ENCODE measurements at regions of chr3 and their contacts with region 1.

Region 1: DNA sequence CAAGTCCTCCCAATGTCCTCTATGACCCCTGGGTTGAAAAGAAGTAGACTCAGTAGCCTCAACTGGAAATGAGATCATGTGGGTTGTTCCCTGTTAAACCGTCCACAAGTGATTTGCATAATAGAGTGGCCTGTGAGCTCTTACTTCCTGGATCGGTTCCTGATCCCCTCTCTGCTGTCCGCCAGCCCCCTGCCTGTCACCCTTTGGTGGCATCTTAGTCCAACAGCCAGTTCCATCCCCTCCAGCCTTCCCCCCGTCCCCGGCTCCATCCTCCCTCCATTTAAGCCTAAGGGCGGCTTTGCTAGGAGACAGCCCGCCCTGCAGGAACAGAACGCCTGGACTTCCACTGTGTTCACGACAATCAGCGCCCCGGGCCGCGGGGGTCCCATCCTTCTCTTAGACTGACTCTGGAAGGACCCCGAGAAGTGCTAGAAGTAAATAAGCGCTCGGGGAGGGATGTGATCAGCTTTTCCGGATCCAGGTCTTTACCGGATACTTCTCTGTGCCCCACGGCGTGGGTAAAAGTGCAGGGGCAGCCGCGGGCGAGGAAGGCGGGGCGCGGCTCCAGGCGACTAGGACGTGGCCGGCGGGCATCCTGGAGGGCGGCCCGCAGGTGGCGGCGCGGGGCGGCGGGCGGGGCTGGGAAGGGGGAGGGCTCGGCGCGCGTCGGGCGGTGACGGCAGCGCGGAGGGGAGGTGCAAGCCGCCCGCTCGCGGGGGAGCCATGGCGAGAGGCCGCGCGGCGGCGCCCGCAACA is 51.2 kb upstream of the ULK4 start:
- DNase-seq: peak; percentile 58
- H3K4me3 ChIP-seq: peak overlapping the region; percentile 91 to 98
- H3K27ac ChIP-seq: peak overlapping the region; percentile 69 to 77
- H3K4me1 ChIP-seq: no peaks in the 10 kb centered on the region
- H3K27me3 ChIP-seq: no peaks in the 10 kb centered on the region
- CTCF ChIP-seq: no peak
- POLR2A ChIP-seq: no peak

Region 2: GRCh38 chr3:41893977-41894376 is 119.1 kb before region 1 on chr3:
- intact Hi-C with region 1: loop called (anchors 10 kb)
- DNase-seq: peak; percentile 29
- H3K4me3 ChIP-seq: no peak overlapping the region
- H3K27ac ChIP-seq: no peak overlapping the region
- H3K4me1 ChIP-seq: no peaks in the 10 kb centered on the region
- H3K27me3 ChIP-seq: no peaks in the 10 kb centered on the region
- CTCF ChIP-seq: peak in 3 of 4 experiments; percentile 31 to 56 (median 54)
- POLR2A ChIP-seq: no peak

Region 3: GRCh38 chr3:41961750-41962679 is 51.1 kb before region 1 on chr3 and contains the start of gene ULK4:
- intact Hi-C with region 1: loop called (anchors 2 kb)
- DNase-seq: peak; percentile 96
- H3K4me3 ChIP-seq: peak within 1 kb of the TSS; percentile 59 to 66
- H3K27ac ChIP-seq: peak within 1 kb of the TSS; percentile 52 to 57
- H3K4me1 ChIP-seq: no peaks in the 10 kb centered on the region
- H3K27me3 ChIP-seq: no peaks in the 10 kb centered on the region
- CTCF ChIP-seq: peak in 1 of 4 experiments; percentile 16
- POLR2A ChIP-seq: peak; percentile 19
- total RNA-seq, gene ULK4: 23.1 to 33.7 TPM

Region 4: DNA sequence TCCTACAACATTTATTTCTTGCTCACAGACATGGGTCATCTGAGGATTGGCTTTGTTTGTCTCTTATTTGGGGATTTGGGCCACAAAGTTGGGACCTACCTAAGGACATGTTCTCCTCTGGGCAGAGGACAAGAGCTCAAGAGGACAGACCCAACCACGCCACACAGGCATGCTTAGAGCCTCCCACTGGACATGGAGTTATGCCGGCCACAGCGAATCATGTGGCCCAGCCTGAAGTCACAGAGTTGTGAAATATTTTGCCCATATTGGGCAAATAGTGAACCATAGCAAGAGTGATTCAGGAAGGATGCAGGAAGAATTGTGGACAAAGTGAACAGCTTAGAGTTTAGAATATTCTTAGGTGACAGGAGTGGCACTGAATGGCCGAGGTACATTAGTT is 87.9 kb after region 1 on chr3:
- intact Hi-C with region 1: loop called (anchors 5 kb)
- DNase-seq: no peak
- H3K4me3 ChIP-seq: no peak overlapping the region
- H3K27ac ChIP-seq: no peak overlapping the region
- H3K4me1 ChIP-seq: no peaks in the 10 kb centered on the region
- H3K27me3 ChIP-seq: no peaks in the 10 kb centered on the region
- CTCF ChIP-seq: no peak
- POLR2A ChIP-seq: no peak